Endothelial cell of umbilical vein (primary cell): ENCODE measurements at regions of chr9 and their contacts with region 1.

Region 1: GRCh38 chr9:77433675-77434445 is 214.3 kb downstream of the GNA14 start:
- DNase-seq: peak; percentile 68
- H3K4me3 ChIP-seq: no peak overlapping the region
- H3K27ac ChIP-seq: no peak overlapping the region
- H3K4me1 ChIP-seq: peaks cover 16% of the 10 kb centered on the region
- H3K27me3 ChIP-seq: no peaks in the 10 kb centered on the region
- CTCF ChIP-seq: peak; percentile 96
- POLR2A ChIP-seq: no peak

Region 2: GRCh38 chr9:77291714-77292113 is 142.1 kb before region 1 on chr9:
- CTCF ChIA-PET with region 1: interaction called, 12 read pairs
- POLR2A ChIA-PET with region 1: no interaction called
- dilution Hi-C with region 1: no loop called
- intact Hi-C with region 1: no loop called
- DNase-seq: peak; percentile 43
- H3K4me3 ChIP-seq: no peak overlapping the region
- H3K27ac ChIP-seq: no peak overlapping the region
- H3K4me1 ChIP-seq: no peaks in the 10 kb centered on the region
- H3K27me3 ChIP-seq: no peaks in the 10 kb centered on the region
- CTCF ChIP-seq: peak; percentile 47 to 48
- POLR2A ChIP-seq: no peak

Region 3: GRCh38 chr9:77449255-77450039 is 15.6 kb after region 1 on chr9:
- CTCF ChIA-PET with region 1: interaction called, 70 read pairs
- POLR2A ChIA-PET with region 1: interaction called, 6 read pairs
- dilution Hi-C with region 1: no loop called
- intact Hi-C with region 1: no loop called
- DNase-seq: peak; percentile 22
- H3K4me3 ChIP-seq: no peak overlapping the region
- H3K27ac ChIP-seq: no peak overlapping the region
- H3K4me1 ChIP-seq: no peaks in the 10 kb centered on the region
- H3K27me3 ChIP-seq: no peaks in the 10 kb centered on the region
- CTCF ChIP-seq: peak in 1 of 2 donors; percentile 7
- POLR2A ChIP-seq: no peak

Region 4: GRCh38 chr9:77648234-77649120 is 214.6 kb after region 1 on chr9 and contains the start of gene GNA14:
- CTCF ChIA-PET with region 1: interaction called, 40 read pairs
- POLR2A ChIA-PET with region 1: no interaction called
- dilution Hi-C with region 1: no loop called
- intact Hi-C with region 1: no loop called
- DNase-seq: peak; percentile 51
- H3K4me3 ChIP-seq: peak within 1 kb of the TSS; percentile 35 to 69 (median 54)
- H3K27ac ChIP-seq: no peak within 1 kb of the TSS
- H3K4me1 ChIP-seq: peaks cover 18% of the 10 kb centered on the region
- H3K27me3 ChIP-seq: peaks cover 1 to 6% of the 10 kb centered on the region in 2 experiments
- CTCF ChIP-seq: no peak
- POLR2A ChIP-seq: no peak
- total RNA-seq, gene GNA14: 3.0 and 3.3 TPM in 2 replicates

Region 5: GRCh38 chr9:77841739-77842386 is 408.0 kb after region 1 on chr9:
- CTCF ChIA-PET with region 1: interaction called, 12 read pairs
- POLR2A ChIA-PET with region 1: no interaction called
- dilution Hi-C with region 1: no loop called
- intact Hi-C with region 1: loop called (anchors 10 kb)
- DNase-seq: peak; percentile 38
- H3K4me3 ChIP-seq: no peak overlapping the region
- H3K27ac ChIP-seq: no peak overlapping the region
- H3K4me1 ChIP-seq: peaks cover 73% of the 10 kb centered on the region
- H3K27me3 ChIP-seq: no peaks in the 10 kb centered on the region
- CTCF ChIP-seq: peak; percentile 12 to 26
- POLR2A ChIP-seq: no peak